ENCODE measurements at regions of chr15 and their contacts with region 1.

Region 1: DNA sequence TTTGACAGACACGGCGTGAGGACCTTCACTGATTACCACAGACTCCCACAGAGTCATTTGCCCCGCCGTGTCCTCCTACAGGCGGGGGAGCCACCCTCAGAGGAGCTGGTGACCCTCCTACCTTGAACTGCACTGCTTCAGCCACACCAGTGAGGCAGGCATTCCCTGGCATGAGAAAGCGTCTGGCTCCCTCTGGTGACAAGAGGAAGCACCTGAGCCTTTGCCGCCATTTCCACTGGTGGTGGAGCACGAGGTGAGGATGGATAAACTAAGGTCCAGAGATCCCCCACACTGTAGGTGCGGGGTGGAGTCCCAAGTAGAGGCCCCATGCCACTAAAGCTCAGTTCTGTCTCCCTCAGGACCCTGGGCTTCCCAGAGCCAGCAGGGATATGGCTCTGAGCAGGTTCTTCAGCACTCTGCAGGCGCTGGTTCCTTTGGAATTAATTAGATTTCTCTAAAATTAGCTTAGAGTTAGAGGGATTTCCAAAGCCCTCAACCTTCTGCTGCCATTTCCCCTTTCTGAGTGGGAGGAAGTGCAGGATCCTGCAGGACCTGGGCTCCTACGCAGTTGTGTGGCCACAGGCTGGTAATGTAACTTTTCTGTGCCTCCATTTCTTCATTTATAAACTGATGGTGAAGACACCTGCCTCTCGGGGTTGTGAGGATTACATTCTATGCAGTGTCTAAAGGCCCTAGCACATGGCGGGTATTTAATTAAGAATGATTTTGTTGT is 224.0 kb downstream of the SLCO3A1 start:
- DNase-seq: no peak
- H3K4me3 ChIP-seq: no peak overlapping the region
- H3K27ac ChIP-seq: no peak overlapping the region
- H3K27me3 ChIP-seq: no peaks in the 10 kb centered on the region
- CTCF ChIP-seq: peak; percentile 77

Region 2: GRCh38 chr15:91302588-91303439 is 774.7 kb before region 1 on chr15:
- CTCF ChIA-PET with region 1: interaction called, 32 read pairs
- POLR2A ChIA-PET with region 1: no interaction called
- DNase-seq: peak; percentile 30
- H3K4me3 ChIP-seq: no peak overlapping the region
- H3K27ac ChIP-seq: no peak overlapping the region
- H3K27me3 ChIP-seq: peaks cover 5% of the 10 kb centered on the region
- CTCF ChIP-seq: peak; percentile 81

Region 3: GRCh38 chr15:91694831-91695210 is 382.7 kb before region 1 on chr15:
- CTCF ChIA-PET with region 1: interaction called, 11 read pairs
- POLR2A ChIA-PET with region 1: no interaction called
- DNase-seq: peak; percentile 15
- H3K4me3 ChIP-seq: peak overlapping the region; percentile 45
- H3K27ac ChIP-seq: peak overlapping the region; percentile 66
- H3K27me3 ChIP-seq: no peaks in the 10 kb centered on the region
- CTCF ChIP-seq: no peak

Region 4: DNA sequence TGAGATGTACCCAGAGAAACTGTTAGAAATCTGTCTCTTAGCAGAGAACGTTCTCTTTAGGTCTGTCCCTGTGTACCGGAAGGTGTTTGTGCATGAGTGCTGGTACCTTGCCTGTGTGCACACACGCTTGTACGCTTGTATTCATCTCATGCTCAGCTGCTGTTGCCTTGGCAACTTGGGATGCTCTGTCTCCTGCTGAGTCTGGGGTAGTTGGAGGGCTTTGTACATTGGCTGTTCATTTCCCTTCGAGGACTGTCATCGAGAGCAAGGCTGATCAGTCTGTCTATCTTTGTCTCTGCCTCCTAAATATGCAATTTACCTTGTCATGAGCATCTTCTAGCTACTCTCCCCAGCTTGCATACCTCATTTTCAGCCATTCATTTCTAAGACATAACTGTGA is 76.8 kb before region 1 on chr15:
- CTCF ChIA-PET with region 1: no interaction called
- POLR2A ChIA-PET with region 1: no interaction called
- DNase-seq: no peak
- H3K4me3 ChIP-seq: no peak overlapping the region
- H3K27ac ChIP-seq: no peak overlapping the region
- H3K27me3 ChIP-seq: no peaks in the 10 kb centered on the region
- CTCF ChIP-seq: no peak